Ascending aorta (tissue), 2 donors: ENCODE measurements at regions of chr10 and their contacts with region 1.

Region 1: DNA sequence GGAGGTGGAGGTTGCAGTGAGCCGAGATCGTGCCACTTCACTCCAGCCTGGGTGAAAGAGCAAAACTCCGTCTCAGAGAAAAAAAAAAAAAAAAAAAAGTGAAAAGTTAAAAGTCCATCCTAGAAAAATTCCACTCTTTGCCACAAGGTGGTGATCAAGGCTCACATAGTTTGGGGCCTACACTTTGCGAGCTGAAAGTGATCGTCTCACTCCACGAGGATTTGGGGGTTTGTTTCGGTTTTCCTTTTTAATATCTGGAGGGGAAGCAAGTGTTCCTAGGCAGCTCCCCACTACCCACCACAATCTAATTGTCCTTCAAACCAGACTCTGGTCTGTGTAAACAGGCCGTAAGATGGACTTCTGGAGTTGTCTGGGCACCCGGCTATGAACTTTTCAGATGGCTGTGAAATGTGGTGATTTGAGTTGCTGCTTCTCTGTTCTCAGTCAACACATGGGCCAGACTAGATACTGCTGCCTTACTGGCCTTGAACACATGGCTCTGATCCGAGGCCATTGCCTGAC is 27.1 kb downstream of the PRLHR start:
- DNase-seq: no peak
- H3K4me3 ChIP-seq: peak overlapping the region in 1 of 2 donors; percentile 27
- H3K27ac ChIP-seq: no peak overlapping the region
- H3K4me1 ChIP-seq: peaks cover 0 to 3% of the 10 kb centered on the region in 2 donors
- H3K27me3 ChIP-seq: no peaks in the 10 kb centered on the region
- CTCF ChIP-seq: peak; percentile 70 to 81 (median 73)

Region 2: GRCh38 chr10:118596426-118597124 is 28.2 kb after region 1 on chr10:
- intact Hi-C with region 1: no loop called
- DNase-seq: no peak
- H3K4me3 ChIP-seq: no peak overlapping the region
- H3K27ac ChIP-seq: no peak overlapping the region
- H3K4me1 ChIP-seq: no peaks in the 10 kb centered on the region
- H3K27me3 ChIP-seq: peaks cover 26% of the 10 kb centered on the region
- CTCF ChIP-seq: no peak

Region 3: GRCh38 chr10:118720685-118721538 is 152.5 kb after region 1 on chr10:
- intact Hi-C with region 1: loop called (anchors 1 kb)
- DNase-seq: peak in 1 of 2 donors; percentile 79
- H3K4me3 ChIP-seq: no peak overlapping the region
- H3K27ac ChIP-seq: no peak overlapping the region
- H3K4me1 ChIP-seq: peaks cover 3 to 6% of the 10 kb centered on the region in 2 donors
- H3K27me3 ChIP-seq: no peaks in the 10 kb centered on the region
- CTCF ChIP-seq: peak; percentile 43 to 86 (median 79)

Region 4: GRCh38 chr10:118800920-118801319 is 232.5 kb after region 1 on chr10:
- intact Hi-C with region 1: loop called (anchors 2 kb)
- DNase-seq: no peak
- H3K4me3 ChIP-seq: no peak overlapping the region
- H3K27ac ChIP-seq: no peak overlapping the region
- H3K4me1 ChIP-seq: no peaks in the 10 kb centered on the region
- H3K27me3 ChIP-seq: no peaks in the 10 kb centered on the region
- CTCF ChIP-seq: peak in 2 of 3 experiments; percentile 38 to 45